ENCODE measurements at regions of chr1 and their contacts with region 1.

Region 1: DNA sequence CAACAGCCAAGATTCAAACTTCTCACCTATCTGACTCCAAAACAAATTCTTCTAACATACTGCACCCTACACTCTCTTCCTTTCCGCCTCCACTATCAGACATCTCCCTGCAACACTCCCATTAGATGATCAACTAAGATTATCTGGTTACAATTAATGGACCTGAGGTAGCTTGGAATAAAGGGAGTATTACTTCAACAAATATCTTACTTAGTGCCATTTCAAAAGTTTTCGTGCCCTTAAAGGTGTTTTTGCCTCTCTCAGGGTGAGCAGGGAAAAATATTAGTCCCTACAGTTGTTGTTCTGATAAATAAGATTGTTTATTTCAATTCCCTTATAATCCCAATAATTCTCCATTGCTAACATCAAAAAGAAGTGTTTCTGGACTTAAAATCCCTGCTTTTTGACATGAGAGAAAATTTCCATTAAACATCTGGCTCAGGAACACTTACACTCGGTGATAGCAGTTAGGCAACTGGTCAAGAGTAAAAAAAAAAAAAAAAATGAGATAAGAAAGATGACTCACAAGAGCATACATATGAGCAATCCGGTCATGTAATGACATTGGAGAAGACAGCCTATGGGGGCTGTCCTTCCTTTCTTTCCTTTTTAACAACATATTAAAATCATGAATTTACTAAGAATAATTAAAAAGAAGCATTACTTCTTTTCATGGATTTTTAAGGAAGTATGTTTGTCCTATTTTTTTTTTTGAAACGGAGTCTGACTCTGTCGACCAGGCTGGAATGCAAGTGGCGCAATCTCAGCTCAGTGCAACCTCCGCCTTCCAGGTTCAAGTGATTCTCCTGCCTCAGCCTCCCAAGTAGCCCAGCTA is 7.6 kb downstream of the RSBN1 start:
- DNase-seq: peak; percentile 52
- H3K4me3 ChIP-seq: no peak overlapping the region
- H3K27ac ChIP-seq: peak overlapping the region; percentile 54
- H3K27me3 ChIP-seq: no peaks in the 10 kb centered on the region
- CTCF ChIP-seq: no peak

Region 2: DNA sequence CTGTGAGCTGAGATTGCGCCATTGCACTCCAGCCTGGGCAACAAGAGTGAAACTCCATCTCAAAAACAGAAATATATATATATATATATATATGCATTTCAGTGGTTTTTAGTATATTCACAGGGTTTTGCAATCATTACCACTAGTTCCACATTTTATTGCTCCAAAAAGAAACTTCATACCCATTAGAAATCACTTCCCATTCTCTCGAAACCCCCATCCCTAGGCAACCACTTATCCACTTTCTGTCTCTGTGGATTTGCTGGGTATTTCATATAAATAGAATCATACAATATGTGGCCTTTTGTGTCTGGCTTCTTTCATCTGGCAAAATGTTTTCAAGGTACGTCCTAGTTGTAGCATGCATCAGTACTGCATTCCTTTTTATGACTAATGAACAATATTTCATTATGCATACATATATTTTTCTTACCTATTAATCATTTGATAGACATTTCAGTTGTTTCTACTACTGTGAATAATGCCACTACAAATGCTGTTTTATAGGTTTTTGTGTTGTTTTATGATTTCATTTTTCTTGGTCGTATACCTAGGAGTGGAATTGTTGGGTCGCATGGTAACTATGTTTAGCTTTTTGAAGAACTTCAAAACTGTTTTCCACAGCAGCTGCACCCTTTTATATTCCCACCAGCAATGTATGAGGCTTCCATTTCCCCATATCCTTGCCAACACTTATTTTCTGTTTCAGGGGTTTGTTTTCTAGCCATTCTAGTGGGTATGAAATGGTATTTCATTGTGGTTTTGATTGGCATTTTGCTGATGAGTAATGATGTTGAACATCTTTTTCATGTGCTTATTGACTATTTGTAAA is 141.3 kb before region 1 on chr1:
- CTCF ChIA-PET with region 1: no interaction called
- POLR2A ChIA-PET with region 1: interaction called, 11 read pairs
- DNase-seq: no peak
- H3K4me3 ChIP-seq: no peak overlapping the region
- H3K27ac ChIP-seq: no peak overlapping the region
- H3K27me3 ChIP-seq: no peaks in the 10 kb centered on the region
- CTCF ChIP-seq: no peak